PC-9 (cell line): ENCODE measurements at regions of chr7 and their contacts with region 1.

Region 1: GRCh38 chr7:1137510-1138167 is 22.4 kb downstream of the ZFAND2A start:
- DNase-seq: no peak
- H3K4me3 ChIP-seq: peak overlapping the region; percentile 74
- H3K27ac ChIP-seq: no peak overlapping the region; the same call in 1 of the 2 replicates
- H3K4me1 ChIP-seq: peaks cover 19% of the 10 kb centered on the region
- H3K27me3 ChIP-seq: no peaks in the 10 kb centered on the region
- CTCF ChIP-seq: no peak

Region 2: GRCh38 chr7:907158-907980 is 230.3 kb before region 1 on chr7:
- CTCF ChIA-PET with region 1: no interaction called
- POLR2A ChIA-PET with region 1: no interaction called
- intact Hi-C with region 1: no loop called
- DNase-seq: no peak
- H3K4me3 ChIP-seq: no peak overlapping the region
- H3K27ac ChIP-seq: no peak overlapping the region
- H3K4me1 ChIP-seq: no peaks in the 10 kb centered on the region
- H3K27me3 ChIP-seq: no peaks in the 10 kb centered on the region
- CTCF ChIP-seq: no peak

Region 3: DNA sequence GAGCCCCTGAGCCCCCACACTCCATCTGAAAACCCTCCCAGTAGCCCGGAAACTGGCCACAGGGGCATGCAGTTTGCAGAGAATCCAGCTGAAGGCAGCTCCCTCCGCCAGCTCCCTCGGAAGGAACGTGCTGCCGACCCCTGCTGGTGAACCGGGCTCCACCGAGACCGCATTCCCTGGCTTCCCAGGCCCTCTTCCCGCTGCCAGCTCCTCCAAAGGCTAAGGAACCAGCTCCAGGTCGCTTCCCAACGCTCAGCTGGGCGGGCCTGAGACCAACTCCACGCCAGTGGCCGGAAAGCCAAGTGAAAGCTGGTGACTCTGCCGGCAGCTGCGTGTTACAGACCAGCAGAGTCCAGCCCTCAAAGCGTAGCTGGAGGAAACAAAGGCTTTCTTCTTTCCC is 13.9 kb before region 1 on chr7:
- CTCF ChIA-PET with region 1: no interaction called
- POLR2A ChIA-PET with region 1: no interaction called
- intact Hi-C with region 1: no loop called
- DNase-seq: no peak
- H3K4me3 ChIP-seq: no peak overlapping the region
- H3K27ac ChIP-seq: no peak overlapping the region
- H3K4me1 ChIP-seq: no peaks in the 10 kb centered on the region
- H3K27me3 ChIP-seq: no peaks in the 10 kb centered on the region
- CTCF ChIP-seq: no peak

Region 4: GRCh38 chr7:1159891-1160668 is 22.4 kb after region 1 on chr7 and contains the start of gene ZFAND2A:
- CTCF ChIA-PET with region 1: interaction called, 5 read pairs
- POLR2A ChIA-PET with region 1: interaction called, 8 read pairs
- intact Hi-C with region 1: loop called (anchors 2 kb)
- DNase-seq: peak; percentile 94 to 100
- H3K4me3 ChIP-seq: peak within 1 kb of the TSS; percentile 96
- H3K27ac ChIP-seq: peak within 1 kb of the TSS; percentile 77
- H3K4me1 ChIP-seq: peaks cover 45% of the 10 kb centered on the region
- H3K27me3 ChIP-seq: no peaks in the 10 kb centered on the region
- CTCF ChIP-seq: no peak
- total RNA-seq, gene ZFAND2A: 51.2 and 65.1 TPM in 2 replicates

Region 5: DNA sequence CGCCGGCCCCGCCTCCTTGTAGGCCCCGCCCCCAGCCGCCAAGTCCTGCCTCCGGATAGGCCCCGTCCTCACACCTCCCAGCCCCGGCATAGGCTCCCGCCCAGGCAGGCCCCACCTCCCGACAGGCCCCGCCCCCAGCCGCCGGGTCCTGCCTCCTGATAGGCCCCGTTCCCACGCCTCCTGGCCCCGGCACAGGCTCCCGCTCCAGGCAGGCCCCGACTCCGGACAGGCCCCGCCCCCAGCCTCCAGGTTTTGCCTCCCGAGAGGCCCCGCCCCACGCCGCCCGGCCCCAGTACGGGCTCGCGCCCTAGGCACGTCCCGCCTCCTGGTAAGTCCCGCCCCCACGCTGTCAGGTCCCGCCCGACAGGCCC is 321.9 kb after region 1 on chr7:
- CTCF ChIA-PET with region 1: no interaction called
- POLR2A ChIA-PET with region 1: no interaction called
- intact Hi-C with region 1: loop called (anchors 5 kb)
- DNase-seq: peak; percentile 92 to 100
- H3K4me3 ChIP-seq: peak overlapping the region; percentile 97; the same call in 1 of the 2 replicates
- H3K27ac ChIP-seq: no peak overlapping the region
- H3K4me1 ChIP-seq: peaks cover 39% of the 10 kb centered on the region
- H3K27me3 ChIP-seq: no peaks in the 10 kb centered on the region
- CTCF ChIP-seq: no peak